Mammary epithelial cell (primary cell): ENCODE measurements at regions of chr22 and their contacts with region 1.

Region 1: DNA sequence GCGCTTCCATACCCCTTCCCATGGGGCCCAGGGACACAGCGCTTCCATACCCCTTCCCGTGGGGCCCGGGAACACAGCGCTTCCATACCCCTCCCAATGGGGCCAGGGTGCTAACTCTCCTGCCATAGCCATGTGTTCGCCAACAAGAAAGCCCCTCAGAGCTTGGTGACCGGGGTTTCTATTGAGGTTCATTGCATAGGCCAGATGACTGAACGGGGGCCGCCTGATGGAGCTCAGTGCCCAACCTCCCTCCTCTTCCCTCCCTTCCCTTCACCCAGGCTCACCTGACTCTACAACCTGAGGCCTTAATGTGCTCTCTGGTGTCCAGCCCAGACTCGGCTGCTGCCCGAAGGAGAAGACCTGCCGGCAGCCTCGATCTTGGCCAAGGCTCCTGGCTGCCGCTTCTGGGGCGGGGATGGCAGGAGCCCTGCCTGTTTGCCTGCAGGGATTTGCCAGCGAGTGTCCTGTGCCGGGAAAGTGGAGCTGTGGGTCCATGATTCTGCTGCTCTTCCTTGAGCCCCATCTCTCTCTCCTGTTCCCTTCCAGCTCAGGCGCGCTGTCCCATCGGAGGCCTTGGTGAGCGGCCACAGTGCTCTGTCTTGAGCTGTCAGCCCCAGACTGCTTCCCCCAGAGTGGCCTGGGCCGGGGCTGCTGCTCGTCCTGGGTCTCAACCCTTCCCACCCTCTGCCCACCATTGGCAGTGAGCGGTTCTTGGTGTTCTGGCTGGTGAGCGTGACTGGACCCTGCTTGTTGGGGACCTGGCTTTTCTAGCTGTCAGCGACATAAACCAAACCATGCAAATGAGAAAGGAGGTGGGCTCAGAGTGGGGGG is 267.0 kb downstream of the TBC1D22A start:
- DNase-seq: no peak
- H3K4me3 ChIP-seq: no peak overlapping the region
- H3K27ac ChIP-seq: no peak overlapping the region
- H3K4me1 ChIP-seq: no peaks in the 10 kb centered on the region
- H3K27me3 ChIP-seq: no peaks in the 10 kb centered on the region
- CTCF ChIP-seq: no peak

Region 2: DNA sequence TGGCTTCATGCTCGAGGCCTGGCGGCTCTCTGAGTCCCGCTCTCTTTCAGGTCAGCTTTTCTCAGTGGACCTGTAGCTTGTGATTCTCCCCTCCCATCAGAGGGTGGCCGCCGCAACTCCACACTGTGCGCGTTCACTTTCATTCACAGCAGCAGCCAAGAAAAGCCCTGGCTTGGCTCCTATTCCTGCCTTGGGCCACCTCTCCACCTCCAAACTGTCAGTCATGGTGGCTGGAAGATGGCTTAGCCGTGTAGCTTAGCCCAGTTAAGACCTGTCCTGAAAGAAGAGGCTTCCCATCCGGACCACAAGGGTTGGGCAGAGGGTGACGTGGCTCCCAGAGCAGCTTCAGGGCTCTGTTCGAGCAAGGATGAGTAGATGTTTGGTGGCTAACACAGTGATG is 141.5 kb before region 1 on chr22:
- CTCF ChIA-PET with region 1: no interaction called
- dilution Hi-C with region 1: loop called (anchors 5 kb)
- in situ Hi-C with region 1: no loop called
- intact Hi-C with region 1: no loop called
- DNase-seq: no peak
- H3K4me3 ChIP-seq: no peak overlapping the region
- H3K27ac ChIP-seq: no peak overlapping the region
- H3K4me1 ChIP-seq: no peaks in the 10 kb centered on the region
- H3K27me3 ChIP-seq: no peaks in the 10 kb centered on the region
- CTCF ChIP-seq: no peak

Region 3: DNA sequence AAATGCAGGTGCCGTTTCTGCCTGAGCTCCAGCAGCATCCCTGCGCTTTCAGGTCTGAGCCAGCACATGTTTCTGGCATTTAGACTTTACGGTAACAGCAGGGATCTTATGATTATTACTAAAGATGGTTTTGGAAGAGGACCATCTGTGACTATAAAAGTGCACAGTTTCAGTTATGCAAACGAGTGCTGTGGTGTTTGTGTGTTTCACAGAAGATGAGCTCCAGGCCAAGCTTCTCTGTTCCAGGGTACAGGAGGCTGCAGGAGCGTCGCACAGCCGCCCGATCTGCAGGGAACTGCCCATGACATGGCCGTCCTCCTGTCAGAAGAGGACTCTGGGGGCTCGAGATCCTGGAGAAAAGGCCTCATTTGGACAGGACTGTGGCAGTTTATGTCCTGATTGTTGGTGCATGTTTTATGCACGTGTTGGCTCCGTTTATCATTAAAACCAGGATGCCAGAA is 30.3 kb after region 1 on chr22:
- CTCF ChIA-PET with region 1: no interaction called
- dilution Hi-C with region 1: loop called (anchors 5 kb)
- in situ Hi-C with region 1: no loop called
- intact Hi-C with region 1: no loop called
- DNase-seq: peak; percentile 1
- H3K4me3 ChIP-seq: no peak overlapping the region
- H3K27ac ChIP-seq: no peak overlapping the region
- H3K4me1 ChIP-seq: no peaks in the 10 kb centered on the region
- H3K27me3 ChIP-seq: no peaks in the 10 kb centered on the region
- CTCF ChIP-seq: no peak